ENCODE measurements at regions of chr17 and their contacts with region 1.

Region 1: GRCh38 chr17:7484067-7484918 is at the start of gene POLR2A:
- DNase-seq: peak; percentile 97
- H3K4me3 ChIP-seq: peak within 1 kb of the TSS; percentile 72 to 78 (median 77)
- H3K27ac ChIP-seq: peak within 1 kb of the TSS; percentile 96
- H3K4me1 ChIP-seq: peaks cover 21% of the 10 kb centered on the region
- H3K27me3 ChIP-seq: no peaks in the 10 kb centered on the region
- CTCF ChIP-seq: no peak
- total RNA-seq, gene POLR2A: 168 to 184 TPM

Region 2: GRCh38 chr17:7081341-7082062 is 402.8 kb before region 1 on chr17:
- CTCF ChIA-PET with region 1: no interaction called
- dilution Hi-C with region 1: no loop called
- in situ Hi-C with region 1: no loop called
- intact Hi-C with region 1: no loop called
- DNase-seq: no peak
- H3K4me3 ChIP-seq: no peak overlapping the region
- H3K27ac ChIP-seq: no peak overlapping the region
- H3K4me1 ChIP-seq: peaks cover 7% of the 10 kb centered on the region
- H3K27me3 ChIP-seq: no peaks in the 10 kb centered on the region
- CTCF ChIP-seq: no peak

Region 3: GRCh38 chr17:7380855-7381742 is 103.2 kb before region 1 on chr17 and contains the start of gene TNK1:
- CTCF ChIA-PET with region 1: no interaction called
- dilution Hi-C with region 1: loop called (anchors 5 kb)
- in situ Hi-C with region 1: no loop called
- intact Hi-C with region 1: no loop called
- DNase-seq: peak; percentile 66
- H3K4me3 ChIP-seq: peak within 1 kb of the TSS; percentile 57 to 60 (median 57)
- H3K27ac ChIP-seq: peak within 1 kb of the TSS; percentile 50
- H3K4me1 ChIP-seq: peaks cover 7% of the 10 kb centered on the region
- H3K27me3 ChIP-seq: no peaks in the 10 kb centered on the region
- CTCF ChIP-seq: no peak
- total RNA-seq, gene TNK1: 13.3 to 15.9 TPM

Region 4: DNA sequence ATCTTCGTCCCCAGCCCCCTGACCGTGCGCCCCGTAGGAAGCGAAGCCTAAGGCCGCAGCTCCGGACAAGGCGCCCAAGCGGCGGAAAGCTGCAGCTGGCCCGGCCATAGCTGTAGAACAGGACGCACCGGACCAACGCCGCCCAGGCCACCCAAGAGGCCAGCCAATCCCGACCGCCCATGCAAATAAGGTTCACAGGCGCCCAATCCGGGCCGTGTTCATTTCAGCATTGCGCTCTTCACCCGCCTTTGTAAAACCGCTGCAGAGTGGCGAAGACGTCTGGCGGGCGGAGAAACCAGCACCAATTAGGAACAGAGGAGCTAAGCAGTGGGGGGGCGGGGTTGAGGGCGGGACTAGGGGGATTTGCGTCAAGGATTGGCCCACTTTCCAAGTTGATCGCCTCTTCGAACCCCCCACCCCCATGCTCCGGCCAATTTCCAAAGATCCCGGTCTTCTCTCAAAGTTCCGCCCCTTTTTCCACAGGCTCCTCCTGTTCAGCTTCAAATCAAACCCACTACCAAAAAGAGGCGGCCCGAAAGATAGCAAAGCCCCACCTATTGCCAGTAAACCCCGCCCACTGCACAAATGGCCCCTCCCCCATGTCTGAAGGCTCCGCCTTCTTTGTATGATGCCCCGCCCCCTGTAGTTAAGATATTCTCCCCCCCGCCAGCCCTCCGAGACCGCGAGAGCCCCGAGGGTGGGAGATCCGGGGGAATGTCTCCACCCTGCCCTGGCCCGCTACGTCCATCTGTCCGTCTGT is 80.1 kb before region 1 on chr17 and contains the start of gene TMEM256:
- CTCF ChIA-PET with region 1: no interaction called
- dilution Hi-C with region 1: no loop called
- in situ Hi-C with region 1: no loop called
- intact Hi-C with region 1: loop called (anchors 1 kb)
- DNase-seq: peak; percentile 99
- H3K4me3 ChIP-seq: peak within 1 kb of the TSS; percentile 66 to 86 (median 70)
- H3K27ac ChIP-seq: peak within 1 kb of the TSS; percentile 42
- H3K4me1 ChIP-seq: peaks cover 7% of the 10 kb centered on the region
- H3K27me3 ChIP-seq: no peaks in the 10 kb centered on the region
- CTCF ChIP-seq: no peak
- total RNA-seq, gene TMEM256: 43.8 to 70.8 TPM

Region 5: GRCh38 chr17:7435221-7435675 is 49.0 kb before region 1 on chr17 and contains the start of gene TMEM102:
- CTCF ChIA-PET with region 1: interaction called, 6 read pairs
- dilution Hi-C with region 1: loop called (anchors 5 kb)
- in situ Hi-C with region 1: loop called in 1 of 2 experiments (anchors 5 kb)
- intact Hi-C with region 1: loop called (anchors 1 kb)
- DNase-seq: peak; percentile 97
- H3K4me3 ChIP-seq: peak within 1 kb of the TSS; percentile 60 to 85 (median 68)
- H3K27ac ChIP-seq: peak within 1 kb of the TSS; percentile 81
- H3K4me1 ChIP-seq: peaks cover 38% of the 10 kb centered on the region
- H3K27me3 ChIP-seq: no peaks in the 10 kb centered on the region
- CTCF ChIP-seq: no peak
- total RNA-seq, gene TMEM102: 14.5 to 16.0 TPM

Region 6: GRCh38 chr17:7552621-7553051 is 68.3 kb after region 1 on chr17:
- CTCF ChIA-PET with region 1: no interaction called
- dilution Hi-C with region 1: loop called (anchors 5 kb)
- in situ Hi-C with region 1: no loop called
- intact Hi-C with region 1: no loop called
- DNase-seq: no peak
- H3K4me3 ChIP-seq: no peak overlapping the region
- H3K27ac ChIP-seq: no peak overlapping the region
- H3K4me1 ChIP-seq: peaks cover 14% of the 10 kb centered on the region
- H3K27me3 ChIP-seq: no peaks in the 10 kb centered on the region
- CTCF ChIP-seq: no peak

Region 7: GRCh38 chr17:7583253-7584109 is 99.2 kb after region 1 on chr17 and contains the start of gene MPDU1:
- CTCF ChIA-PET with region 1: no interaction called
- dilution Hi-C with region 1: loop called (anchors 5 kb)
- in situ Hi-C with region 1: no loop called
- intact Hi-C with region 1: no loop called
- DNase-seq: peak; percentile 95
- H3K4me3 ChIP-seq: peak within 1 kb of the TSS; percentile 42 to 63 (median 50)
- H3K27ac ChIP-seq: peak within 1 kb of the TSS; percentile 86
- H3K4me1 ChIP-seq: peaks cover 66% of the 10 kb centered on the region
- H3K27me3 ChIP-seq: no peaks in the 10 kb centered on the region
- CTCF ChIP-seq: no peak
- total RNA-seq, gene MPDU1: 44.8 to 51.2 TPM

Measured in mammary epithelial cell (primary cell).